Dendritic cell treated with granulocyte-macrophage colony-stimulating factor and Interleukin-4, amounts not matched to agents 40 ng/mL and 50 ng/mL, for 4 days (primary cell): ENCODE measurements at regions of chr17 and their contacts with region 1.

Region 1: DNA sequence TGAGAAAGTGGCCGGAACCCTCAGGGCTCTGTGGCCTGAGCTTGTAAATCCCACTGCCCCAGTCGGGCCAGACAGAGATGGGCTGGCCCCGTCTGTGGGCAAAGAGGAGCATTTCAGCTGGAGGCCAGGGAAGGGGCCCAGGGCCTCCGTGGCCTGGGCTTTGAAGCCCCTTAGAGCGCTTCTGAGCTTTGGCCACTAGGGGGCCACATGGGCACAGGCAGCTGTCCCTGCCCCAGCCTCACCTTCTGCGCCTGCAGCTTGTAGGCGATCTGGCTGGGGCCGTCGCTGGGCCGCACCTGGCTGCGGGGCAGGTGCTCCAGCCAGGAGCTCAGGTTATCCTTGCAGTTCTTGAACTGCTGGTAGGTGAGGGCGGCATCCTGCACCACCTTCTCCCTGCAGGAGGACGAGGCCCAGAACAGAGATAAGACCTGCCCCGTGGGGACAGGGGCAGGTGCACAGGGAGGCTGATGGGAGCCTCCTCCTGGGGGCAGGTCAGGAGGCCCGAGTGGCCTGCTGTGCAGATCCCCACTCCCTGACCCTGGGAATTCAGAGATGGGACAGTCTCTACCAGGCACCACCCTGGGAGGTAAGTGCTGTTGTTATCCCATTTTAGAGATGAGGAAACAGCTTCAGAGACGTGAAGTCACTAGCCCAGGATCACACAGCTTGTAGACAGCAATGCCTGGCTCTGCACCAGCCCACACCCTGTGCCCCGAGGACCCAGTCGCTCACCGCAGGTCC is 12.8 kb downstream of the EVPL start:
- H3K4me3 Mint-ChIP-seq: no peak overlapping the region
- H3K27ac Mint-ChIP-seq: no peak overlapping the region
- H3K4me1 Mint-ChIP-seq: no peaks in the 10 kb centered on the region
- H3K27me3 Mint-ChIP-seq: peaks cover 12% of the 10 kb centered on the region

Region 2: GRCh38 chr17:76111956-76112355 is 97.6 kb after region 1 on chr17:
- intact Hi-C with region 1: no loop called
- H3K4me3 Mint-ChIP-seq: no peak overlapping the region
- H3K27ac Mint-ChIP-seq: no peak overlapping the region
- H3K4me1 Mint-ChIP-seq: no peaks in the 10 kb centered on the region
- H3K27me3 Mint-ChIP-seq: peaks cover 39% of the 10 kb centered on the region

Region 3: GRCh38 chr17:76296186-76296585 is 281.8 kb after region 1 on chr17:
- intact Hi-C with region 1: loop called (anchors 5 kb)
- H3K4me3 Mint-ChIP-seq: no peak overlapping the region
- H3K27ac Mint-ChIP-seq: no peak overlapping the region
- H3K4me1 Mint-ChIP-seq: no peaks in the 10 kb centered on the region
- H3K27me3 Mint-ChIP-seq: no peaks in the 10 kb centered on the region